Activated T-helper 1 cell treated with anti-CD3 and anti-CD28 coated beads, Interleukin-12 subunit alpha, Interleukin-12 subunit beta, Interleukin-2, Interleukin-4 antibody, amounts not matched to agents 30 ng/mL and 10 ng/mL and 1 ng/mL, durations not matched to agents 14 hours and 24 hours and 36 hours (primary cell): ENCODE measurements at regions of chr11 and their contacts with region 1.

Region 1: DNA sequence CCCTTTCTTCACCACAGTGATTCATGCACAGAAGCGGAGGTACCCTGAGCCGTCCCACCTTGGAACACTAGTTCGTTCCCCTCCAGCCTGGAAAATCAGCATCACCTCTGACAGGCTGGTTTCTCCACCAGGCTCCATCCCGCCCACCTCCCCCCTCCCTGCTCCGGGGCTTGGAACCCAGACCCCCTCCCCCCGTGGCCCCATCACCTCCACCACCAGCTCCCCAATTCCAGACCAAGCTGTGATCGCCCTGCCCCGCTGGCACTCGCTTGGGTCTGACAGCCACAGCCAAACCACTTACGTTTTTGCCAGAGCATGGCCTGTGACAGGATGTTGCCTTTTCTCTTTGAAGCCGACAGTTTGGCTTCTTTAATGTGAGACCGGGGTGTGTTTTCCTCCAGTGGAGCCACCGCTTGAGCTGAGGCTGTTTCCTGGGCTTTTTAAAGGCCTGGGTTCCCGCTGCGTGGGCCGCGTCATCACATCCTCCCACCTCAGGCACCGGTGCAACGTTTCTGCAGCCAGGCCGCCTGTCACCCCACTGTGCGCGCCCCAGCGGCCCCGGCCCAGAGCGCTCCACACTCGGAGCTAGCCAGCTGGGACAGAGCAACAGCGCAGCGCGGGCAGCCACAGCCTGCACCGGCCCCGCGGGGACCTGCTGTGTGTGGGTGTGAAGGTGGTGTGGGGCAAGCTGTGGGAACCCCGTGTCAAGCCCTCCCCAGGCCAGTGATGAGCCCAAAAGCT is at the start of gene POU2AF1:
- DNase-seq: peak; percentile 71
- H3K4me3 Mint-ChIP-seq: peak within 1 kb of the TSS; percentile 83
- H3K27ac Mint-ChIP-seq: peak within 1 kb of the TSS; percentile 100
- H3K4me1 Mint-ChIP-seq: peaks cover 81% of the 10 kb centered on the region
- H3K27me3 Mint-ChIP-seq: no peaks in the 10 kb centered on the region
- total RNA-seq, gene POU2AF1: 80.7 and 81.0 TPM in 2 replicates

Region 2: GRCh38 chr11:110092515-110093404 is 1286.3 kb before region 1 on chr11 and contains the start of gene ZC3H12C:
- intact Hi-C with region 1: loop called (anchors 5 kb)
- DNase-seq: peak; percentile 47
- H3K4me3 Mint-ChIP-seq: peak within 1 kb of the TSS; percentile 87
- H3K27ac Mint-ChIP-seq: peak within 1 kb of the TSS; percentile 93
- H3K4me1 Mint-ChIP-seq: peaks cover 16% of the 10 kb centered on the region
- H3K27me3 Mint-ChIP-seq: peaks cover 56% of the 10 kb centered on the region
- total RNA-seq, gene ZC3H12C: 5.7 and 6.2 TPM in 2 replicates

Region 3: GRCh38 chr11:110453684-110454354 is 925.2 kb before region 1 on chr11:
- intact Hi-C with region 1: loop called (anchors 1 kb)
- DNase-seq: no peak
- H3K4me3 Mint-ChIP-seq: peak overlapping the region; percentile 17
- H3K27ac Mint-ChIP-seq: peak overlapping the region; percentile 51
- H3K4me1 Mint-ChIP-seq: peaks cover 52% of the 10 kb centered on the region
- H3K27me3 Mint-ChIP-seq: no peaks in the 10 kb centered on the region

Region 4: DNA sequence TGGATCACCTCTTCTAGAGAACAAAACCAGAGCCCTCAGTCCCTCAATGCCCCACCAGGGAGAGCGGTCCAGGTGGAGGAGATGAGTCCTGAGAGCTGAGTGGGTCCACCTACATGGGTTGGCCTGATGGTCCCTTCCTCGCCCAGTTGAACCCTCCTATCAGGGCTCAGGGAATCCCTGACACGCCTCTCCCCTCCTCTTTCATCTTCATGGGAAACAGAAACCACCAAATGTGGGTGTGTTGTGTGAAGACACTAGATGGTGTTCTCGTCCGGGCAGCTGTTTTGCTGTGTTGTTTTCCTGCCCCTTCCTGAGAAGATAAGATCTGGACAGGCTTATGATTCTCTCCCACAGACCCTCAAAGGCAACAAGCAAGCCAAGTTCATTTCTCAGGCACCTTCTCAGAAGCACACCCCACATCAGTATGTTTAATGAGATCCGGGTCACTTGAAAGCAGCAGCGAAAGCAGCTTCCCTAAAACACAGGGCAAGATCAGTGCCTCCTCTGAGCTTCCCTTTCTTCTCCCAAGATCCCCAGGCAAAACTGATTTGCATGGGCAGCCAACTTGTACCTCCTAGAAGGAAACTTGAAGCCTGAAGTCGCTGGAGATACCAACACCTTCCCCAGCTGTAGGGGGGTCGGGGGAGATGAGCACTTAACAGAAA is 35.4 kb after region 1 on chr11:
- intact Hi-C with region 1: loop called (anchors 1 kb)
- DNase-seq: no peak
- H3K4me3 Mint-ChIP-seq: peak overlapping the region; percentile 25
- H3K27ac Mint-ChIP-seq: peak overlapping the region; percentile 76
- H3K4me1 Mint-ChIP-seq: peaks cover 92% of the 10 kb centered on the region
- H3K27me3 Mint-ChIP-seq: no peaks in the 10 kb centered on the region

Region 5: DNA sequence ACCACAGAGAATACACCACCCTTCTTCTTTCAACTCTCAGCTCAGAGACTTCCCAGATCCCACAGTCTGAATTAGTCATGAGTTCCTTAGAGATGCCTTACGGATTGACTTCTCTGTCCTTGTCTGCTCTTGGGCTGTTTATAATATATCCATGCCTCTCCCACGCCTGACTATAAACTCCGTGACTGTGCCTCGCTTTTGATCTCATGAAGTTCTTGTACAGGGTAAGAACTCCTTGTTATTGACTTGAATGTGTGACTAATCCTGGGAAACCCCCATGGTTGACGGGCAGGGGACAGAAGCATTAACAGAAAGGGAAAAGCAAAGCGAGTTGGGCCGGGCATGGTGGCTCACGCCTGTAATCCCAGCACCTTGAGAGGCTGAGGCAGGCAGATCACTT is 62.4 kb after region 1 on chr11:
- intact Hi-C with region 1: no loop called
- DNase-seq: no peak
- H3K4me3 Mint-ChIP-seq: no peak overlapping the region
- H3K27ac Mint-ChIP-seq: no peak overlapping the region
- H3K4me1 Mint-ChIP-seq: peaks cover 41% of the 10 kb centered on the region
- H3K27me3 Mint-ChIP-seq: peaks cover 3% of the 10 kb centered on the region

Region 6: DNA sequence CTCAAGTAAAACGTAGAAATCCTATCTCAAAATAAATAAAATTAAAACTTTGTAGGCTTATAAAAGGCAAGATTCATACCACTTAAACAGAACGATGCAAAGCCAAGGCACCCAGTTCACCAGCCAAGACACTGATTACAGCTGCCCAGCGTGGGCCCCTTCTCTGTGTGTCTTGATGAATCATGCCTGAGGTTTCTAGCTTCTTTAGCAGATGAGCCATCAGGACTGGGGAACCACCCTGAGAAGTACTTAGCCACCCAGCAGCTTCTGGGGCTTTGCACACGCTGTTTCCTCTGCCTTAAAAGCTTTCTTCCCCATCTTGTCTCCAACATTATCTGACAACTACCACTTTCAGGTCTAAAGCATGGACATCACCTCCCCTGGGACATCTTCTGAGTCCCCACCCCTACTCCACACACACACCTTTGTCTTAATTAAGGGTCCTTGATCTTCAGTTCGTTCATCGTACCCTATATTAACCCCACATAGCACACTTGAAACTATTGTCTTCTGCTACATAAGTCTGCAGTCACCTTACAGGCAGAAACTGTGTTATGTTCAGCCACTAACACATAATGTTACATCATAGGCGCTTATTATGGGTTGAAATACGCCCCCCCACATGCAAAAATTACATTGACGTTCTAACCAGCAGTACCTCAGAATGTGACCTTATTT is 152.8 kb after region 1 on chr11:
- intact Hi-C with region 1: loop called (anchors 2 kb)
- DNase-seq: peak; percentile 52
- H3K4me3 Mint-ChIP-seq: no peak overlapping the region
- H3K27ac Mint-ChIP-seq: peak overlapping the region; percentile 56
- H3K4me1 Mint-ChIP-seq: peaks cover 31% of the 10 kb centered on the region
- H3K27me3 Mint-ChIP-seq: peaks cover 14% of the 10 kb centered on the region

Region 7: GRCh38 chr11:111793863-111794262 is 414.8 kb after region 1 on chr11:
- intact Hi-C with region 1: no loop called
- DNase-seq: no peak
- H3K4me3 Mint-ChIP-seq: no peak overlapping the region
- H3K27ac Mint-ChIP-seq: no peak overlapping the region
- H3K4me1 Mint-ChIP-seq: peaks cover 9% of the 10 kb centered on the region
- H3K27me3 Mint-ChIP-seq: no peaks in the 10 kb centered on the region

Region 8: GRCh38 chr11:111878849-111879636 is 500.0 kb after region 1 on chr11 and contains the starts of genes CFAP68 and FDXACB1:
- intact Hi-C with region 1: loop called (anchors 2 kb)
- DNase-seq: peak; percentile 92
- H3K4me3 Mint-ChIP-seq: peak within 1 kb of the TSS; percentile 94
- H3K27ac Mint-ChIP-seq: peak within 1 kb of the TSS; percentile 100
- H3K4me1 Mint-ChIP-seq: peaks cover 26% of the 10 kb centered on the region
- H3K27me3 Mint-ChIP-seq: peaks cover 2% of the 10 kb centered on the region
- total RNA-seq, gene CFAP68: 17.7 and 22.3 TPM in 2 replicates
- total RNA-seq, gene FDXACB1: 7.9 and 9.4 TPM in 2 replicates